ENCODE measurements at regions of chr5 and their contacts with region 1.

Region 1: GRCh38 chr5:74640450-74640953 is at the start of gene ENC1:
- DNase-seq: peak; percentile 80
- H3K4me3 Mint-ChIP-seq: peak within 1 kb of the TSS; percentile 75
- H3K27ac Mint-ChIP-seq: no peak within 1 kb of the TSS
- H3K4me1 Mint-ChIP-seq: peaks cover 30% of the 10 kb centered on the region
- H3K27me3 Mint-ChIP-seq: peaks cover 33% of the 10 kb centered on the region
- total RNA-seq, gene ENC1: 0.29 to 0.44 TPM

Region 2: GRCh38 chr5:73902327-73903051 is 738.0 kb before region 1 on chr5:
- CTCF ChIA-PET with region 1: interaction called, 22 read pairs
- POLR2A ChIA-PET with region 1: no interaction called
- intact Hi-C with region 1: no loop called
- DNase-seq: no peak
- H3K4me3 Mint-ChIP-seq: no peak overlapping the region
- H3K27ac Mint-ChIP-seq: no peak overlapping the region
- H3K4me1 Mint-ChIP-seq: peaks cover 10% of the 10 kb centered on the region
- H3K27me3 Mint-ChIP-seq: peaks cover 37% of the 10 kb centered on the region

Region 3: DNA sequence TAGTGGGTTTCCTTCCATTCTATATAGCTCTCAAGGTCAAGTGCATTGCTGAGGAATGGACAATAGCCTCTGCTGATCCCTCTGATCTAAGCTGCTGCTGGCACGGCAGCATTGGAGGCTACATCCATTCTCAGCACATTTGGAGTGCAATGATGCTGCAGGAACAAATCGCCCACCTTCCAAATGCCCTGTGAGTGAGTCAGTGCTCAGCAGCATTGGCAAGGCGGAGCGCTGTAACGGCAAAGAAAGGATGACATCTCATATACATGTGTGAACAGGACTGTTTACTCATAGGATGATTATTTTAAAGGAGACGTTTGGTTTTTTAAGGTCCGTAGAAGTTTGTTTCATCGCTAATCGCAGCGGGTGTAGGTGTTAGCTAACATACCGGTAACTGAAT is 605.8 kb before region 1 on chr5:
- CTCF ChIA-PET with region 1: no interaction called
- POLR2A ChIA-PET with region 1: no interaction called
- intact Hi-C with region 1: loop called (anchors 5 kb)
- DNase-seq: no peak
- H3K4me3 Mint-ChIP-seq: no peak overlapping the region
- H3K27ac Mint-ChIP-seq: no peak overlapping the region
- H3K4me1 Mint-ChIP-seq: peaks cover 7% of the 10 kb centered on the region
- H3K27me3 Mint-ChIP-seq: peaks cover 11% of the 10 kb centered on the region

Region 4: DNA sequence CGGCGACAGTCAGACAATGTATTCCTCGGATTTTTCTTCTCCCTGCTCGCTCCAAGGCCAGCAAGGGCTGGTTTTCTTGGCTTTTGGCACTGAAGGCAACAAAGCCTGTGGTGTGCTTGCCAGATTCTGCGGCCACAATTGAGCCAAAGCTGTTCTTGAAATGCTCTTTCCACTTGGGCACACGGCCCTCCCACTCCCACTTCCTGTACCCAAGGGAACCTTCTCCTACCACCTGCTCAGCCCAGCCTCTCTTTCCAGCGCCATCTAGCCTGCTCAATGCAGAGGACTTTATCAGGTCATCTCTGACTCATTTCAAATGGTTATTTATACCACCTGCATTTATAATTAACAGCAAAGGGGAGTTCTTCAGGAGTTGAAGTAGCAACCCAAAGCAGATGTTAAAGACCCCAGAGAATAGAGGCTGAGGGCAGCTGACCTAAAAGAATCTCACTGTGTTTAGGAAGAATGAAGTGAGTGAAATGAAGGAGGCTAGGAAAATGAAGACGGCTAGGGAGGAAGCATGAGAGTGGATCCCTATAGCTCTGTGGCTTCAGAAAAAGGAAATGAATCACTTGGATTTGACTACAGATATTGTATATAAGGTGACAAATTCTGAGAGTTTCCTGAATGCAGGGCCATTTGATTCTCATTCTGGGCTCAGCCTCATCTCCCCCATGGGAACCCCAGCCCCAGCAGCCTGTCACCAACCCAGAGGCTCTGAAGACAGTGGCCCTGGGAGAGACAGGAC is 439.0 kb before region 1 on chr5:
- CTCF ChIA-PET with region 1: no interaction called
- POLR2A ChIA-PET with region 1: no interaction called
- intact Hi-C with region 1: loop called (anchors 10 kb)
- DNase-seq: peak; percentile 15
- H3K4me3 Mint-ChIP-seq: no peak overlapping the region
- H3K27ac Mint-ChIP-seq: no peak overlapping the region
- H3K4me1 Mint-ChIP-seq: peaks cover 13% of the 10 kb centered on the region
- H3K27me3 Mint-ChIP-seq: peaks cover 10% of the 10 kb centered on the region

Region 5: DNA sequence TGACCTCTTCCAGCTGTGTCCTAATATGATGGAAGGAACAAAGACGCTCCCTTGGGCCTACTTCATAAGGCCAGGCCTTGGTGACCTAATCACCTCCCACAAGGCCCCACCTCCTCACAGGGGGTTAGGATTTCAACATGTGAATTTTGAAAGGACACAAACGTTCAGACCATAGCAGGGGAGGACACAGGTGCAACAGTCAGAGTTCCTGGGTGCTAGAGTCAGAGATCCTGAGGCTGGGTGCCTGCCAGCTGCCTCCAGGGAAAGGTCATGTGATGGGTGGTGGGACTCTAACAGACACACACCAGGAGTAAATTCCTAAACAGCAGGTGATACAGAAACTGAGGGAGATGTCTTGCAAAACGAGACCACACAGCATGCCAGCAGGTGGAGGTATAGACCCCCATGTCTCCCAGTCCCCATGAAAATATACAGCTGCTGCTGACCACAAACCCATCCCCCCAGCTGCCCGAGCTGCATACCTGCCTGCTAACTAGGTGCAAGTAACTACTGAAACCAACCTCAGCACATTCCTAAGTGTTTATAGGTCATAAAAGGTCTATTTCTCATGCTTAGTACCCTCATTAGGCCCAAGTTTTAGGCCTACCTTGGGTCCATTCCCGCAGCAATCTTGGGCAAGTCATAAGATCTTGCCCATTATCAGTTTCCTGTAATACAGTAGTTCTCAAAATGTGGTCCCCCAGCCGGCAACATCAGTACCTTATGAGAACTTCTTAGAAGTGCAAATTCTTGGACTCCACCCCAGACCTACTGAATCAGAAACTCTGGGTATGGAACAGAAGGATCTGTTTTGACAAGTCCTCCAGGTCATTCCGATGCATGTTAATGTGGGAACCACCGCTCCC is 245.4 kb before region 1 on chr5:
- CTCF ChIA-PET with region 1: interaction called, 3 read pairs
- POLR2A ChIA-PET with region 1: no interaction called
- intact Hi-C with region 1: loop called (anchors 5 kb)
- DNase-seq: no peak
- H3K4me3 Mint-ChIP-seq: no peak overlapping the region
- H3K27ac Mint-ChIP-seq: no peak overlapping the region
- H3K4me1 Mint-ChIP-seq: peaks cover 2% of the 10 kb centered on the region
- H3K27me3 Mint-ChIP-seq: no peaks in the 10 kb centered on the region

Region 6: DNA sequence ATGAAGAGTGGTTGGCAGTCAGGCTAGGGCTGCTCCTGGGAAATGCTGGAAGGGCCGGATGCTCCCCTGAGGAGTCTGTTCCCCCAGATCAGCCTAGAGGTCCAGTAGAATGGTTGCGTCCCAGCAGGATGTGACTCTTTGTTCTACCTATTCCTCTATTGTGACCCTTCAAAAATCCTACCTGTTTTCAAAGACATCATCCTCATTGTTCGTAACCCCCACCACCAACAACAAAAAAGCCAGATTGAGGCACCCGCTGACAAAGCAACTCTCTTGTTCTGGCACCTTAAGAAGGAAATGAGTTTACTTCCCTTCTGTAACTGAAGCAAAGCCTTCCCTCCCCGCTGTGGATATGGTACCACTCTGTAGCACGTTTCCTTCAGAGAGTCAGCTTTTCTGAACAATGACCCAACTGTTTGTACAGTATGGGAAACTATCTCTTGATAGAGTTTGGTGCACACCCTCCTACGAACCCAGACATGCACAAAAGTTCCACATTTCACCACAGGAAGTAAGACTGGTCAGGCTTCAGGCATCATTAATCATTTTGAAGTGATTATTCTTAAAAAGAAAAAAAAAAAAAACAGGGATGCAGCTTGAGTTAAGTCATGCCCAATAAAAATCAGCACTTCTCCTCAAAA is 207.1 kb before region 1 on chr5:
- CTCF ChIA-PET with region 1: no interaction called
- POLR2A ChIA-PET with region 1: no interaction called
- intact Hi-C with region 1: no loop called
- DNase-seq: no peak
- H3K4me3 Mint-ChIP-seq: no peak overlapping the region
- H3K27ac Mint-ChIP-seq: no peak overlapping the region
- H3K4me1 Mint-ChIP-seq: no peaks in the 10 kb centered on the region
- H3K27me3 Mint-ChIP-seq: peaks cover 40% of the 10 kb centered on the region

Region 7: GRCh38 chr5:74476046-74476818 is 164.3 kb before region 1 on chr5:
- CTCF ChIA-PET with region 1: no interaction called
- POLR2A ChIA-PET with region 1: no interaction called
- intact Hi-C with region 1: loop called (anchors 10 kb)
- DNase-seq: no peak
- H3K4me3 Mint-ChIP-seq: no peak overlapping the region
- H3K27ac Mint-ChIP-seq: no peak overlapping the region
- H3K4me1 Mint-ChIP-seq: no peaks in the 10 kb centered on the region
- H3K27me3 Mint-ChIP-seq: peaks cover 4% of the 10 kb centered on the region

Region 8: GRCh38 chr5:74622122-74622521 is 18.4 kb before region 1 on chr5:
- CTCF ChIA-PET with region 1: interaction called, 5 read pairs
- POLR2A ChIA-PET with region 1: interaction called, 3 read pairs
- intact Hi-C with region 1: loop called (anchors 2 kb)
- DNase-seq: peak; percentile 54
- H3K4me3 Mint-ChIP-seq: no peak overlapping the region
- H3K27ac Mint-ChIP-seq: no peak overlapping the region
- H3K4me1 Mint-ChIP-seq: peaks cover 13% of the 10 kb centered on the region
- H3K27me3 Mint-ChIP-seq: peaks cover 40% of the 10 kb centered on the region

Region 9: DNA sequence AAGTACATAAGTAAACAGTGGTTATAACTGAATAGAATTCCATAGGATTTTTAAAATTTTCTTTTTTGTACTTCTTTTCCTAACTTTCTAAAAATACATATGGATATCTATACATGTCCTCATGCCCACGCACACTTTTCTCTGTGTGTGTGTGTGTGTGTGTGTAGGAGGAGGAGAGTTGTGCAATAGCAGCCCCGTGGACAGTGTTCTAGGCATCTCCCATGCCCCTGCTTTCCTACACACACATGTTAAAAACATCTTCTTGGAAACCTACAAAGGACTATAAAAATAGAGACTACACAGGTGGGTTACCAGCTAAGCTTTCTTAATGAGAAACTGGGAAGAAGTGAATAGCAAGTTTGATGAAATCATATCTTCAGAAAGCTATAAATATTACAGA is 24.8 kb after region 1 on chr5:
- CTCF ChIA-PET with region 1: no interaction called
- POLR2A ChIA-PET with region 1: no interaction called
- intact Hi-C with region 1: no loop called
- DNase-seq: no peak
- H3K4me3 Mint-ChIP-seq: no peak overlapping the region
- H3K27ac Mint-ChIP-seq: no peak overlapping the region
- H3K4me1 Mint-ChIP-seq: no peaks in the 10 kb centered on the region
- H3K27me3 Mint-ChIP-seq: peaks cover 15% of the 10 kb centered on the region

Measured in activated CD4-positive, alpha-beta memory T cell treated with anti-CD3 and anti-CD28 coated beads for 36 hours (primary cell).